HAP-1 (cell line): ENCODE measurements at regions of chr7 and their contacts with region 1.

Region 1: DNA sequence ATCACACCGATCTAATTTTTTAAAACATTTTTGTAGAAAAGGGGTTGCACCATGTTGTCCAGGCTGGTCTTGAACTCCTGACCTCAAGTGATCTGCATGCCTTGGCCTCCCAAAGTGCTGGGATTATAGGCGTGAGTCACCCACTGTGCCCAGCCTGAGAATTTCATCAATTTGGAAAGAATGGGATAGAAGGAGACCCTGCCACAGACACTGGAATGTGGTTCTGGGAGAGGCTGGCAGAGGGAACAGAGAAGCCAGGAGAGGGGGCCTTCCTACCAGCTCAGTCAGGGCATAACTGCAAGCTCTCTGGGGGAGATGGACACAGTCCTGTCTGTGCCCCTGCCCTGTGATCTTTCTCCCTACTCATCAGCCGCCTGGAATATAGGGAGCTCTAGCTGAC is 42.1 kb upstream of the MKRN1 start:
- DNase-seq: no peak
- H3K4me3 ChIP-seq: no peak overlapping the region
- H3K4me1 ChIP-seq: no peaks in the 10 kb centered on the region
- H3K27me3 ChIP-seq: no peaks in the 10 kb centered on the region

Region 2: DNA sequence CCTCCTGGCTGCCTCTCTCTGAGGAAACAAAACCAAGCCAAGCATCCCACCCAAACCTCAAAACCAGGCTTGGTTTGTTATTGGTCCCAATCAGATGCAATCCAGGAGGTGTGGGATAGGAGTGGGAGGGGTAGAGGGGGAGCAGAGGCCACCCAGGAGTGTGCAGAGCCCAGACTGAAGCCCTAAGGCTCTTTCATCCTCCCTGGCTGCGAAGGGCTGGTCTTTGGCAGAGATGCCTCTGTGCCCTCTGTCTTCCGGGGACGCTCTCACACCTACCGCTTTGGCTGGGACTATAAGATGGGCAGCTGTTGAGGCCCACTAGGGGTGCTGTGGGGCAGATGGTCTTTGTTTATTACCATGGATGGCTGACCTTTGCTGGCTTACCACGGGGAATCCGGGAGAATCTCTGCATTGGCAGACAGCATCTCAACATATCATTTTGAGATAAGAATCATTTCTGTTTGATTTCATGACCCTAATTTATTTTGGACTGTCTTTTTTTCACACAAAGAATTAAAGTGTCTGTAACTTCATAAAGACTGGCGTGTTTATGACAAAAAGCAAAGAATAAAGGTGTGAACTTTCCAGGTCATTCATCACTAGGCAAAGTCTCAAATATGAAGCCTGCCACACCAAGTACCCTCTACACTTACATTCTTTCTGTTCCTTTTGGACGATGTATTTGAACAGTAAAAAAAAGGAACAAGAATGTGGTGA is 125.7 kb after region 1 on chr7:
- in situ Hi-C with region 1: loop called (anchors 5 kb)
- DNase-seq: peak; percentile 56 to 76
- H3K4me3 ChIP-seq: no peak overlapping the region
- H3K4me1 ChIP-seq: no peaks in the 10 kb centered on the region; the same call in 1 of the 2 replicates
- H3K27me3 ChIP-seq: no peaks in the 10 kb centered on the region

Region 3: DNA sequence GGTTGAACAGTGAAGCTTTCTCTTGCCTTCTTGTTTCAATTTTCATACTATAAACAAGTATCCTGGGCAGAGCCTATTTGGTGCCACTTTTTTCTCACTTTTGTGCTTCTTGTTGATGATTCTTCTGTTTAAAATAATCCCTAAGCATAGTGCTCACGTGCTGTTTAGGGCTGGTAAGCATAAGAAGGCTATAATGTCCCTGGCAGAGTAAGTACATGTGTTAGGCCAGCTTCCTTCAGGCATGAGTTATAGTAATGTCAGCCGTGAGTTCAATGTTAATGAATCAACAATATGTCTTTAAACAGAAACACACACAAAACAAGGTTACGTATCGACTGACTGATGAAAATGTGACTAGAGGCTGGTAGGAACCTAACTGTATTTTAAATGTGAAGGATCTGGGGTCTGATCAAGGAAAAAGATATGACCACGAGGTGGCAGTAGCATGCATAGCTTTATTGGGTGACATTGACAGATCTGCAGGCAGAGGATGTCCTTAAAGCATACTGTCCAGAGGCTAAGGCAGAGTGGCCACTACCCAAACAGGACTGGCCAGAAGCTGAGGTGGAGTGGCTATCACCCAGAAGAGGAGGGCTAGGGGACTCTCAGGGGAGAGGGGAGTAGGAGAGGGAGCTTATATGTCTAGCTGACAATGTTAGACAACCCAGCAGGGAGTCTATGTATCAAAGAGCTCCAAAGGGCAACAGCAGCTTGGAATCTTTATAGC is 289.6 kb after region 1 on chr7:
- in situ Hi-C with region 1: no loop called
- DNase-seq: peak; percentile 62 to 78
- H3K4me3 ChIP-seq: no peak overlapping the region
- H3K4me1 ChIP-seq: peaks cover 7% of the 10 kb centered on the region
- H3K27me3 ChIP-seq: no peaks in the 10 kb centered on the region